ENCODE measurements at regions of chr4 and their contacts with region 1.

Region 1: DNA sequence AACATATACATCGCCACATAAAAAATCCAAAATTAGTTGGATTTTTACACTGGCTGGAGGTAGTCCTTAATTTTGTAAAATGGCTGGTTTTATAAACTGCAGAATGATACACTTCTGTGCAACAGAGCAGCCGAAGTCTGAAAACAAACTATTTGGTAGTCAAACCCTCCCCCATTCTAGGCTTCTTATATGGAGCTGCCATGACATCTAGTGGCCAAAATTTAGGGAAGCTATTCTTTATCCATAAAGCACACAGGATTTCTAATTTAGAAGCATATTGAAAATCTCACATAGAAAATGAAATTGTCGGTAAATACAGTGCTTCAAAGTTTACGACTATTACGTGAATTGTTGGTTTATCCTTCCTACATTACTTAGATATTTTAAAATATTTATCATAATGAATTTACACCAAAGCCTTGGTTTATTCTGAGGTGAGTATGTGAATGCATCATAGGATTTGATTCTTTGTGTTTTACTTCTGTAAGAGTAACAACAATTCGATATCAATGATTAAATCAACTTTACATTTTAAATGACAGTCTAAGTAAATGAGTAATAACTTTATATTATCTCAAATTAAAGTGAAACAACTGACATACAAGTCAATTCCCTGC is 113.4 kb upstream of the FAM241A start:
- DNase-seq: peak; percentile 38 to 58 (median 40)
- ATAC-seq: peak; percentile 86
- H3K4me3 ChIP-seq: no peak overlapping the region
- H3K27ac ChIP-seq: no peak overlapping the region
- H3K4me1 ChIP-seq: no peaks in the 10 kb centered on the region
- H3K27me3 ChIP-seq: no peaks in the 10 kb centered on the region
- CTCF ChIP-seq: peak; percentile 57 to 76 (median 69); a peak in 5 of 6 replicates
- EP300 ChIP-seq: no peak
- POLR2A ChIP-seq: no peak
- RAD21 ChIP-seq: peak; percentile 78 to 85

Region 2: GRCh38 chr4:110310795-110311194 is 1721.0 kb before region 1 on chr4:
- CTCF ChIA-PET with region 1: interaction called, 3 read pairs
- POLR2A ChIA-PET with region 1: no interaction called
- in situ Hi-C with region 1: loop called (anchors 25 kb)
- intact Hi-C with region 1: loop called (anchors 1 kb)
- DNase-seq: no peak
- ATAC-seq: peak; percentile 80
- H3K4me3 ChIP-seq: no peak overlapping the region
- H3K27ac ChIP-seq: no peak overlapping the region
- H3K4me1 ChIP-seq: no peaks in the 10 kb centered on the region
- H3K27me3 ChIP-seq: no peaks in the 10 kb centered on the region; a peak in 1 of 5 replicates
- CTCF ChIP-seq: no peak
- EP300 ChIP-seq: no peak
- POLR2A ChIP-seq: no peak
- RAD21 ChIP-seq: no peak

Region 3: DNA sequence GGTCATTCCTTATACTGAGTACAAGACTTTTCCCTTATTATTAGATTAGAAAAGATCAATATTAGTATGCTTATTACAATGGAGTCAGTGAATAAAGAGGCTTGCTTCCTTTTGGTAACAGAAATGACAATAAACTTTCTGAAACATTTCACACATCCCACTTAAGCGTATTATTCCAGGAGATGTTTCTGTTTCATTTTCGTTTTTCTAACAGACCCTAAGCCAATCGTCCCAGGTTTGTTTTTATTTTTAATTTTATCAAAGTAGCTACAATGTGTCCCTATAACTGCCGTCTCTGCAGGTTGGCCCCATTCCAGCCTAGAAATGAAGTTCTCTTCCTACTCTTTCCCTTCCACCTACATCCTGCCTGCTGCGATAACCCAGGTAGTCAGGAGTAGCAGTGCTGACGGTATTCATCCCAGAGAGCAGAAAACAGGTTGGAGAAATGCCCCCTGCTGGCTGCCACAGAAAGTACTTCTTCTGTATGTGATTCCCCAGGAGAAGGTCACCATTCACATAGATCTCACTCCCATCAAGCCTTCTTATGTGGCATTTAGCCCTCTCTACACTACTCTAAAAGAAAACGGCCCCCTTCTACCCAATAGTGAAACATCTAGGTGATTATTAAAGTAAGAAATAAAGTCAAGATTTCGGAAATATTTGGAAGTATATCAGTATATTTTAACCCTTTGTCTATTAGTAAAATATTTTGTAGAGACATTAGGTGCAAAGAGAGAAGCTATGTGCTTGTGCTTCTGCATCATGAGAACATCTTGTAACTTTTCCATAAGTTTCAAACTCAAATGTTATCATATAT is 1515.5 kb before region 1 on chr4:
- CTCF ChIA-PET with region 1: no interaction called
- POLR2A ChIA-PET with region 1: no interaction called
- in situ Hi-C with region 1: no loop called
- intact Hi-C with region 1: loop called (anchors 2 kb)
- DNase-seq: peak; percentile 44 to 67 (median 51)
- ATAC-seq: peak; percentile 97
- H3K4me3 ChIP-seq: no peak overlapping the region
- H3K27ac ChIP-seq: no peak overlapping the region
- H3K4me1 ChIP-seq: no peaks in the 10 kb centered on the region
- H3K27me3 ChIP-seq: no peaks in the 10 kb centered on the region
- CTCF ChIP-seq: peak; percentile 69 to 81 (median 76)
- EP300 ChIP-seq: no peak
- POLR2A ChIP-seq: no peak
- RAD21 ChIP-seq: peak; percentile 31 to 48

Region 4: GRCh38 chr4:110631584-110632505 is 1400.0 kb before region 1 on chr4:
- CTCF ChIA-PET with region 1: interaction called, 4 read pairs
- POLR2A ChIA-PET with region 1: no interaction called
- in situ Hi-C with region 1: no loop called
- intact Hi-C with region 1: loop called (anchors 5 kb)
- DNase-seq: peak; percentile 65 to 72 (median 71)
- ATAC-seq: peak; percentile 99
- H3K4me3 ChIP-seq: no peak overlapping the region
- H3K27ac ChIP-seq: no peak overlapping the region
- H3K4me1 ChIP-seq: peaks cover 0 to 20% of the 10 kb centered on the region in 2 experiments; a peak in 2 of 5 replicates
- H3K27me3 ChIP-seq: peaks cover 39 to 53% of the 10 kb centered on the region in 2 experiments; a peak in 4 of 5 replicates
- CTCF ChIP-seq: peak; percentile 68 to 84 (median 75)
- EP300 ChIP-seq: no peak
- POLR2A ChIP-seq: no peak
- RAD21 ChIP-seq: peak; percentile 34 to 60; a peak in 3 of 4 replicates

Region 5: GRCh38 chr4:111641955-111642579 is 389.8 kb before region 1 on chr4:
- CTCF ChIA-PET with region 1: interaction called, 3 read pairs
- POLR2A ChIA-PET with region 1: no interaction called
- in situ Hi-C with region 1: no loop called
- intact Hi-C with region 1: loop called (anchors 2 kb)
- DNase-seq: peak; percentile 31 to 60 (median 37)
- ATAC-seq: peak; percentile 71; the same call in 2 of the 3 replicates
- H3K4me3 ChIP-seq: no peak overlapping the region
- H3K27ac ChIP-seq: no peak overlapping the region
- H3K4me1 ChIP-seq: no peaks in the 10 kb centered on the region
- H3K27me3 ChIP-seq: no peaks in the 10 kb centered on the region
- CTCF ChIP-seq: peak; percentile 52 to 86 (median 66)
- EP300 ChIP-seq: no peak
- POLR2A ChIP-seq: no peak
- RAD21 ChIP-seq: peak; percentile 44 to 62; a peak in 2 of 4 replicates

Region 6: GRCh38 chr4:111854494-111855087 is 177.2 kb before region 1 on chr4:
- CTCF ChIA-PET with region 1: no interaction called
- POLR2A ChIA-PET with region 1: no interaction called
- in situ Hi-C with region 1: no loop called
- intact Hi-C with region 1: loop called (anchors 10 kb)
- DNase-seq: peak; percentile 8 to 23 (median 20)
- ATAC-seq: 0 out of 3 replicates have a peak, but pooled peaks have one; percentile 56
- H3K4me3 ChIP-seq: no peak overlapping the region
- H3K27ac ChIP-seq: no peak overlapping the region
- H3K4me1 ChIP-seq: no peaks in the 10 kb centered on the region
- H3K27me3 ChIP-seq: no peaks in the 10 kb centered on the region
- CTCF ChIP-seq: peak; percentile 21 to 49 (median 42); a peak in 5 of 6 replicates
- EP300 ChIP-seq: no peak
- POLR2A ChIP-seq: no peak
- RAD21 ChIP-seq: peak; percentile 32 to 64; a peak in 3 of 4 replicates

Measured in K562 (cell line).